Dendritic cell treated with granulocyte-macrophage colony-stimulating factor and Interleukin-4, amounts not matched to agents 40 ng/mL and 50 ng/mL, for 4 days (primary cell): ENCODE measurements at regions of chr17 and their contacts with region 1.

Region 1: DNA sequence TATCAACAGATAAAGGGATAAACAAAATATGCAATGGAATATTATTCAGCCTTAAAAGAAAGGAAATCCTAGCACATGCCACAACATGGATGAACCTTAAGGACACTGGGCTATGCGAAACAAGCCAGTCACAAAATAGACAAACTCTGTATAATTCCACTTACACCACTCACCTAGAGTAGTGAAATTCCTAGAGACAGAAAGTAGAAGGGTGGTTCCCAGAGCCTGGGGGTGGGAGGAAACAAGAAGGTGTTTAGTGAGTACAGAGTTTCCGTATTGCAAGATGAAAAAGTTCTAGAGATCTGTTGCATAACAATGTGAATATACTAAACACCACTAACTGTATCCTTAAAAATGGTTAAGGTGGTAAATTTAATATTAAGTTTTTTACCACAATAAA is 10.0 kb downstream of the SPOP start:
- H3K4me3 Mint-ChIP-seq: no peak overlapping the region
- H3K27ac Mint-ChIP-seq: no peak overlapping the region
- H3K4me1 Mint-ChIP-seq: peaks cover 21% of the 10 kb centered on the region
- H3K27me3 Mint-ChIP-seq: no peaks in the 10 kb centered on the region

Region 2: DNA sequence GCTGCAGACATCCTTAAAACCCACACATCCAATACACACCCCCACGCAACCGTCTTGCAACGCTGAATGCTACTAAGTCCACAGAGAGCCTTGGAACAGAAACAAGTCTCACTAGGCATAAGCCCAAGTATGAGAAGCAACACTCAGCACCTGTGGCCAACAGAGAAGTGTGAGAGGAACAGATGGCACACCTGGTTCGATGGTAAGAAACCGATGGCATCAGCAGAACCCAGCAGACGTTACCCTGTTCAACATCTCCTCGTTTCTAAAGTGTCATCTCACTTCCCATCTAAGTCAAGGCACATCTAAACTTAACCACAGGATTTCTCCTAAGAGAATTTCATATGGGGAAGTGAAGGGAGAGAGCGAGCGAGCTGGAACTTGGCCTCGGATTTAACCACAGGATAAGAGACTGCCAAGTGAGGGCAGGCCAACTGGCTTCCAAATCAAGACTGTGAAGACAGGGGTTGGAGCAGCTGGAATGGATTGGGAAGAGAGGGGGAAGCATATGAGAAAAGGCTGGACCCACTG is 51.2 kb before region 1 on chr17:
- intact Hi-C with region 1: loop called (anchors 10 kb)
- H3K4me3 Mint-ChIP-seq: no peak overlapping the region
- H3K27ac Mint-ChIP-seq: peak overlapping the region; percentile 66
- H3K4me1 Mint-ChIP-seq: peaks cover 22% of the 10 kb centered on the region
- H3K27me3 Mint-ChIP-seq: no peaks in the 10 kb centered on the region

Region 3: GRCh38 chr17:50129728-50130558 is 462.1 kb after region 1 on chr17 and contains the start of gene SAMD14:
- intact Hi-C with region 1: no loop called
- H3K4me3 Mint-ChIP-seq: peak within 1 kb of the TSS; percentile 67
- H3K27ac Mint-ChIP-seq: peak within 1 kb of the TSS; percentile 18
- H3K4me1 Mint-ChIP-seq: peaks cover 49% of the 10 kb centered on the region
- H3K27me3 Mint-ChIP-seq: peaks cover 62% of the 10 kb centered on the region